Activated CD4-positive, alpha-beta memory T cell treated with anti-CD3 and anti-CD28 coated beads for 36 hours (primary cell): ENCODE measurements at regions of chr6 and their contacts with region 1.

Region 1: DNA sequence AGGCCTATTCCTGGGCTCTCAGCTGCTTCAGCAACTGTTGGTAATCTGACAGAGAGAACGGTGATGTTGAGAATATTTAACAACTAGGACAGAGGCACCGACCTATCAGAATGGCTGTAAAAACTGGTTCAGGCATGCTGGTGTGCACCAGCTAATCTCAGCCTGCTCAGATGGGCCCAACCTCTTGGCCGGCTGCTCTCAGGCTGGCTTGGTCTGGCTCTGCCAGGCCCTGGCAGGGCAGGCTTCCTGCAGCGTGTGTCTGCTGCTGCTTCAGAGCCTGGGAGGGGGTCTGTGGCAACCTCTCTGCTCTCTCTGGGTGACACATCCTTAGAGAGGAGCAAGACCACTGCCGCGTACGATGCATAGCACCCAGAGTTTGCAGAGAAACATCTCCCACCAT is 4.8 kb downstream of the SLC2A12 start:
- DNase-seq: no peak
- H3K4me3 Mint-ChIP-seq: no peak overlapping the region
- H3K27ac Mint-ChIP-seq: no peak overlapping the region
- H3K4me1 Mint-ChIP-seq: peaks cover 7% of the 10 kb centered on the region
- H3K27me3 Mint-ChIP-seq: peaks cover 12% of the 10 kb centered on the region

Region 2: GRCh38 chr6:133799043-133799442 is 248.6 kb before region 1 on chr6:
- CTCF ChIA-PET with region 1: no interaction called
- POLR2A ChIA-PET with region 1: no interaction called
- intact Hi-C with region 1: no loop called
- DNase-seq: no peak
- H3K4me3 Mint-ChIP-seq: no peak overlapping the region
- H3K27ac Mint-ChIP-seq: no peak overlapping the region
- H3K4me1 Mint-ChIP-seq: no peaks in the 10 kb centered on the region
- H3K27me3 Mint-ChIP-seq: peaks cover 10% of the 10 kb centered on the region

Region 3: DNA sequence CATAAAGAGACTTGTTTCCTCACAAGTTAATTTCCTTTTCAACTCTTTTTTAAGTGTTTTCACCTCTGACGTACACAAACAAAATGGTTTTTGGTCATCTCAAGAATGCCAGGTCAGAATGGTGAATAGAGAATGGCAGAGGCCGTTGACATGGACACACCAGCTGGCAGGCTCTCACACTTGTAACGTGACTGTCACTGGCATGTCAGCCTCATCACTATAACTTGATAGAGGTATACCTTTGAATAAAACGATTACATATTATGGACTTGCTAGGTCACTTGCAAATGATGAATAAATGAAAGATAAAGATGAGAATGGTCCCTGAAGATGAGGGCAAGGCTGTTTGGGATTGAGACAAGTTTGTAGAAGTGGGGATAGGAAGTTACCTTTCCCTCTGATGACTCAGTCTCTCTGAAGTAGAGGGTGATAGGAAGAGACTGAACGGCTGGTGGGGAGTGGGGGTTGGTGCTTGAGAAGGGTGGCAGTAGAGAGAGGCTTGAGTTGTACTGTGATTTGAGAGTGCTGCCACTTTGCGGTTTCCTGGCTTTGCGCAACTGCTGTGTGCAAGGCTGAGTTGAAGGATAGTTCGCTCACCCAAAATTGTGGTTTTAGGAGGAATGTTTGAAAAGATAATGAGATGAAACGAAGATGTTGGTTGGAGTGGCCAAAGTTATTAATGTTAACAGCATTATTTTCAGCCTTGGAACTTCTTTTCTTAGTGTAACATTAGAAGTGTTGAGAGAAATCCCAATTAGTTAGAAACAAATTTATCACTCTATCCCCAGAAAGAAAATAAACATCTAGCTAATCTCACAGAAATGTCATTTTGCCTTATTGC is 64.4 kb before region 1 on chr6:
- CTCF ChIA-PET with region 1: no interaction called
- POLR2A ChIA-PET with region 1: no interaction called
- intact Hi-C with region 1: loop called (anchors 2 kb)
- DNase-seq: peak; percentile 73
- H3K4me3 Mint-ChIP-seq: no peak overlapping the region
- H3K27ac Mint-ChIP-seq: no peak overlapping the region
- H3K4me1 Mint-ChIP-seq: peaks cover 40% of the 10 kb centered on the region
- H3K27me3 Mint-ChIP-seq: no peaks in the 10 kb centered on the region